ENCODE measurements at regions of chr12 and their contacts with region 1.

Region 1: DNA sequence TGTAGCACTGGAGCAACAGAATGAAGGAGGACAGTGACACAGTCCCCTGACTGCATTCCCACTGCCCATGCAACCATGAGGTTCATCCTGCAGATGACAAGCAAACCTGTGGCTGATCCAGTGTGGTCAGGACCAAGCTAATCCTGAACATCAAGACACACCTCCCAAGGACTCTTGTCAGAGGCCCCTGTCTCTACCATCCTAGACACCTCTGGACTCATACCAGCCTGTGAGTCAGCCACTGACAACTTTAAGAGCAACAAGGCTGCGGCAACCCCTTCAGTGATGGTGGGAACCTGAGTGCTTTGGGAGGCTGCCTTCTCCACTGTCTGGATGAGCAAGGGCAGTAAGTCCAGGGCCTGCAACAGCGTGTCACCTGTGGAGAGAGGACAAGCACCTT is 24.6 kb downstream of the GCN1 start:
- DNase-seq: no peak
- H3K4me3 ChIP-seq: no peak overlapping the region
- H3K27ac ChIP-seq: no peak overlapping the region
- H3K27me3 ChIP-seq: no peaks in the 10 kb centered on the region
- CTCF ChIP-seq: no peak

Region 2: GRCh38 chr12:120139958-120140357 is 30.0 kb before region 1 on chr12:
- in situ Hi-C with region 1: loop called (anchors 5 kb)
- DNase-seq: no peak
- H3K4me3 ChIP-seq: no peak overlapping the region
- H3K27ac ChIP-seq: no peak overlapping the region
- H3K27me3 ChIP-seq: no peaks in the 10 kb centered on the region
- CTCF ChIP-seq: no peak

Region 3: GRCh38 chr12:120495723-120496412 is 325.9 kb after region 1 on chr12 and contains the start of gene DYNLL1:
- in situ Hi-C with region 1: no loop called
- DNase-seq: peak; percentile 95
- H3K4me3 ChIP-seq: peak within 1 kb of the TSS; percentile 96
- H3K27ac ChIP-seq: peak within 1 kb of the TSS; percentile 43
- H3K27me3 ChIP-seq: no peaks in the 10 kb centered on the region
- CTCF ChIP-seq: no peak

Measured in brain microvascular endothelial cell (primary cell).